ENCODE measurements at regions of chr10 and their contacts with region 1.

Region 1: DNA sequence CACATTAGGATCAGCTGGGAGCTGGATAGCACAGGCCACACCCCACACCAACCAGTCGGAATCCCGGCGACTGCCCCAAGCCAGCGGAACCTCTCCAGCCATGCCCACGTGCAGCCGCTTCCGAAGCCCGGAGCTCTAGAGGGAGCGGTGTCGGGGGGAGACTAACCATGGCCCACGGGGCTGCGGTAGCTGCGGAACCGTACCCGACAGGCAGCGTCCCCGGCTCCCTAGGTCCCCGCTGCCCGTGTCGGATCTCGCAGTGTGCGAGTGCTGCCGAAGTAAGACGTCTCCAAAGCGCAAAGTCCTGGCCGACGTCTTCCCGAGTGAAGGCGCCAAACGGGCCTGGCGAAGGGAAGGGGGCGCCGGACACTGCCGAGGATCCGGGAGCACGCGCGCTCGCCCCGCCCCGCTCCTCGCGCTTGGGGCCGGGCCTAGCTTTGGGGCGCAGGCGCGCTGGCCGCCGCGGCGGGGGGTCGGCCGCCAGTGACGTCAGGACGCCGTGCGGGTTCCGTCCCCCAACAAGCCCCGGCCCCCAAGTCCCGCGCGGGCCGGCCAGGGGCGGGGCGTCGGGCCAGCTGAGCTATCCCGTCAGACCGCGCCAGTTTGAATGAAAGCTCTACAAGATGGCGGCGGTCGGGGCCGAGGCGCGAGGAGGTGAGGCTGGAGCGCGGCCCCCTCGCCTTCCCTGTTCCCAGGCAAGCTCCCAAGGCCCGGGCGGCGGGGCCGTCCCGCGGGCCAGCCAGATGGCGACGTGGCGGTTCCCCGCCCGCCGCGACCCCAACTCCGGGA is at the start of gene SUV39H2:
- DNase-seq: peak; percentile 96 to 99
- H3K4me3 ChIP-seq: peak within 1 kb of the TSS; percentile 93
- H3K4me3 Mint-ChIP-seq: peak within 1 kb of the TSS; percentile 99
- H3K27ac Mint-ChIP-seq: peak within 1 kb of the TSS; percentile 99
- H3K4me1 ChIP-seq: peaks cover 9% of the 10 kb centered on the region; the same call in 1 of the 2 replicates
- H3K4me1 Mint-ChIP-seq: peaks cover 14% of the 10 kb centered on the region
- H3K27me3 ChIP-seq: no peaks in the 10 kb centered on the region
- H3K27me3 Mint-ChIP-seq: no peaks in the 10 kb centered on the region
- CTCF ChIP-seq: peak in 1 of 2 experiments; percentile 6
- total RNA-seq, gene SUV39H2: 58.3 and 60.4 TPM in 2 replicates

Region 2: DNA sequence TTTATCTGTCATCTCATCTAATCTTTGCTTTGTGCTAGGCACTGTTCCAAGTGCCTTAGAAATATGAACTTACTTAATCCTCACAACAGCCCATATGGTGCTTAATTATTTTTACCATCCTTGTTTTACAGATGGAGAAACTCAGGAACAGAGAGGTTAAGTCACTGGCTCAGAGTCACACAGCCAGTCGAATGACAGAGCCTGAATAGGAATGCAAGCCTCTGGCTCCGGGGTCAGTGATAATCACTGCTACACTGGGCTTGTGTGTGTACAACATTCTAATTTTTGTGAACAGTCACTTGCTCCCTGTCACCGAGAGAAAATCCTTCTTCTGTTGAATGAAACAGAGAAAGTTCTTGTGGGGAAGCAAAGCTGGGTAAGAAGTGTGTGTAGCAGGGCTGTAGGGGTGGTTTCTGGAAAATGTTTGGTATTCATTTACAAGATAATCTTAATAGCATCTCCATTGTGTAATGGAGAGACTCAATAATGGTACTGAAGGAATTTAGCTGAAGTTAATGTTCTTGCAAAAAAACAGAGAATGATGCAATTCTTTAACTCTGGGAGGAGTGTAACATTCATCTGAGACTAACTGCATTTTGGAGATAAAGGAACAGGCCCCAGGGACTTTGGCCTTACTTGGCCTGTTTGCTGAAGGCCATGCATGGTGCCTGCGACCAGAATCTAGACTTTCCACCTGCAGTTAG is 838.3 kb before region 1 on chr10:
- CTCF ChIA-PET with region 1: no interaction called
- POLR2A ChIA-PET with region 1: no interaction called
- intact Hi-C with region 1: no loop called
- DNase-seq: peak; percentile 79 to 84
- H3K4me3 ChIP-seq: no peak overlapping the region
- H3K4me3 Mint-ChIP-seq: peak overlapping the region; percentile 29
- H3K27ac Mint-ChIP-seq: peak overlapping the region; percentile 83
- H3K4me1 ChIP-seq: peaks cover 39% of the 10 kb centered on the region
- H3K4me1 Mint-ChIP-seq: peaks cover 35% of the 10 kb centered on the region
- H3K27me3 ChIP-seq: no peaks in the 10 kb centered on the region
- H3K27me3 Mint-ChIP-seq: no peaks in the 10 kb centered on the region
- CTCF ChIP-seq: no peak

Region 3: GRCh38 chr10:14499601-14499904 is 378.9 kb before region 1 on chr10:
- CTCF ChIA-PET with region 1: no interaction called
- POLR2A ChIA-PET with region 1: no interaction called
- intact Hi-C with region 1: loop called (anchors 5 kb)
- DNase-seq: no peak
- H3K4me3 ChIP-seq: no peak overlapping the region
- H3K4me3 Mint-ChIP-seq: no peak overlapping the region
- H3K27ac Mint-ChIP-seq: no peak overlapping the region
- H3K4me1 ChIP-seq: no peaks in the 10 kb centered on the region; the same call in 1 of the 2 replicates
- H3K4me1 Mint-ChIP-seq: peaks cover 15% of the 10 kb centered on the region
- H3K27me3 ChIP-seq: no peaks in the 10 kb centered on the region
- H3K27me3 Mint-ChIP-seq: no peaks in the 10 kb centered on the region
- CTCF ChIP-seq: no peak

Region 4: DNA sequence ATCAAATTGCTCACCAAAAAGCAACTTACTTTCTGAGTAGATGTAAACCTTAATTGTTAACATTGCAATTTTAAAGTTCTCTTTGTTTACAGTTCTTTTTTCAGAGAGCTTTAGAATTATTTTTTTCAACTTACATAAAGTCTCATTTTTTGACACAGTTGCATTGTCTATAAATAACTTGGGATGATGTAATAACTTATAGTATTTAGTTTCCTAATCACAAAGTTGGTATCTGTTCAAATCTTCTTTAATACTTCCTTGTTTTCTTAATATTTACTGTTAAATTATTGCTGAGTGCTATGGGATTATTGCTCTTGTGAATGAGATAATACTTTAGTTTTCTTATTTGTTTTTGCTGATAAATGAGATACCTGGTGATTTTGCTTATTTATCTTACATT is 18.7 kb before region 1 on chr10:
- CTCF ChIA-PET with region 1: interaction called, 5 read pairs
- POLR2A ChIA-PET with region 1: interaction called, 12 read pairs
- intact Hi-C with region 1: no loop called
- DNase-seq: no peak
- H3K4me3 ChIP-seq: no peak overlapping the region
- H3K4me3 Mint-ChIP-seq: no peak overlapping the region
- H3K27ac Mint-ChIP-seq: no peak overlapping the region
- H3K4me1 ChIP-seq: 0 out of 2 replicates have a peak, but pooled peaks cover 4% of the 10 kb centered on the region
- H3K4me1 Mint-ChIP-seq: peaks cover 12% of the 10 kb centered on the region
- H3K27me3 ChIP-seq: no peaks in the 10 kb centered on the region
- H3K27me3 Mint-ChIP-seq: no peaks in the 10 kb centered on the region
- CTCF ChIP-seq: no peak

Region 5: DNA sequence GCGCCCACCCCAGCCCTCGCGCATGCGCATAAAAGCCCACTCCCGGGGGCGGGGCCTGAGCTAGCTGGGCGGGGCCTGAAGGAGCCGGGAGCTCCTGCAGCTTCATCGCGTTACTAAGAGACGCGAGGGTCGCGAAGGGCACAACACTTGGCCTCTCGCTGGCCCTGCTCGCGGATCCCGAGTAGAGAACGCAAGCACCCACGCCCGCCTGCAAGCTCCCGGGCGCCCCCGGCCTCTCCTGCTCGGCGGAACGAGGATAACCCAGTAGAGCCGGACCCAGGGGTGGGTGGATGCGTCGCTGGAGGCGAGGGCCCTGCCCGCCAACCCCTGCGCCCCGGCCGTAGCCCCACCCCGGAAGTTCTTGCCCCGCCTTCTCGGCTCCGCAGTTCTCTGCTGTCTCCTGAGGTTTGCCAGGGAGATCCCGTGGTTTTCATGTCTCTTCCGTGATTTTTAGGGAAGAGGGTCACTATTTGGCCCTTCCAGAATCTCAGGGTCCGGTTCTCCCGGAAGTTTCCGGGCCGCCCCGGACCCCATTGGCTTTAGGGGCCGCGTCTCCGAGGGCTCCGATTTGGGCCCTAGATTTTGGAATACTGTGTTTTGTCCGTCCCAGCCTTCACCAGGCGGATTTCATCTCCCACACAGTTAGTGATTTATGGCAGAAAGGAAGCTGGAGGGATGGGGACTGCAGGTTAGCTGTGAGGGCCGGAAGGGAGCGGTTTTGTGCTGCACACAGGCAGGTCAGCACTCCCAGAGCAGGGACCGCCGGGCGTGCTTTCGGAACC is 81.0 kb after region 1 on chr10 and contains the start of gene MEIG1:
- CTCF ChIA-PET with region 1: interaction called, 5 read pairs
- POLR2A ChIA-PET with region 1: interaction called, 22 read pairs
- intact Hi-C with region 1: loop called (anchors 1 kb)
- DNase-seq: peak; percentile 98 to 99
- H3K4me3 ChIP-seq: peak within 1 kb of the TSS; percentile 62
- H3K4me3 Mint-ChIP-seq: peak within 1 kb of the TSS; percentile 99
- H3K27ac Mint-ChIP-seq: peak within 1 kb of the TSS; percentile 100
- H3K4me1 ChIP-seq: peaks cover 9% of the 10 kb centered on the region
- H3K4me1 Mint-ChIP-seq: peaks cover 6% of the 10 kb centered on the region
- H3K27me3 ChIP-seq: no peaks in the 10 kb centered on the region
- H3K27me3 Mint-ChIP-seq: no peaks in the 10 kb centered on the region
- CTCF ChIP-seq: no peak
- total RNA-seq, gene MEIG1: not detected in 2 replicates

Region 6: DNA sequence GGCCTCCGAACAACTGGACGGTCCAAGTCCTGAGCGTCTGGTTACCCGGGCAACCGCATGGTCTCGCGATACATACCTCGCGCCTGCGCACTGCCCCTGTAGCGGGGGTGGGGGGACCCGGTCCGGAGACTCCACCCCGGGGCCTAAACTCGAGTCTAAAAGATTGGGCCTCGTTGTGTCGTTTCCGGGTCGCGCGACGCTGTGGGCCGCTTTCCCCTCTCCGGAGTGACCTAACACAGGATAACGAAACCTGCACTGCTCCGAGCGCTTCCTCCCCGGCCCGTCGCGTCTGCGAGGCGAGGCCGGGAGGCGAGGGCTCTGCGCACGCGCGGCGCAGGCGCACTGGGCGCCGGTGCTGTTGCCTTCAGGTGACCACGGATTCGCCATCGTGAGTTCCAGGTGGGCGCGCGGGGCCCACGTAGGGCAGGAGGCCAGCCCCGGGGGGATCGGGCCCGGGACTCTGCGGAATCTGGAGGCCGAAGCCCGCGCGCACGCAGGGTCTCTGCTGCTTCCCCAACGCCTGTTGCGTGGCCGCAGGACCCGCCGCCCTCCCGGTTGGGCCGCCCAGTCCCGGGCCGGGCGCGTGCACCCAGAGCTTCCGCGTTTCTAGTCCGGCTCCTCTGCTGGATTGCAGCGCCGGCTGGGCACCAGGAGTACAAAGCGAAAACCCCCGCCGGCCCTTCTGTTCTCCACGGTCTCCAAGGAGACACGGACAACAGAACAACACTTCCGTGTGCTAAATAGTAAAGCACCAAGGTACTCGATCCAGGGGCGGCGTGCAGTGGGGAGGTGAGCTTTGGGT is 218.8 kb after region 1 on chr10 and contains the start of gene RPP38:
- CTCF ChIA-PET with region 1: no interaction called
- POLR2A ChIA-PET with region 1: interaction called, 3 read pairs
- intact Hi-C with region 1: loop called (anchors 2 kb)
- DNase-seq: peak; percentile 98 to 100
- H3K4me3 ChIP-seq: peak within 1 kb of the TSS; percentile 89
- H3K4me3 Mint-ChIP-seq: peak within 1 kb of the TSS; percentile 100
- H3K27ac Mint-ChIP-seq: peak within 1 kb of the TSS; percentile 100
- H3K4me1 ChIP-seq: peaks cover 9% of the 10 kb centered on the region; the same call in 1 of the 2 replicates
- H3K4me1 Mint-ChIP-seq: peaks cover 20% of the 10 kb centered on the region
- H3K27me3 ChIP-seq: no peaks in the 10 kb centered on the region
- H3K27me3 Mint-ChIP-seq: peaks cover 1% of the 10 kb centered on the region
- CTCF ChIP-seq: no peak
- total RNA-seq, gene RPP38: 40.1 and 40.7 TPM in 2 replicates

Measured in Caco-2 (cell line).